Left ventricle myocardium inferior (tissue), 1 donor: ENCODE measurements at regions of chr4 and their contacts with region 1.

Region 1: GRCh38 chr4:112604589-112604988 is 32.1 kb downstream of the ZGRF1 start:
- DNase-seq: no peak
- H3K4me3 ChIP-seq: no peak overlapping the region
- H3K27ac ChIP-seq: no peak overlapping the region
- H3K4me1 ChIP-seq: no peaks in the 10 kb centered on the region
- H3K27me3 ChIP-seq: no peaks in the 10 kb centered on the region
- CTCF ChIP-seq: peak; percentile 70

Region 2: GRCh38 chr4:112327965-112328733 is 276.4 kb before region 1 on chr4:
- intact Hi-C with region 1: loop called (anchors 5 kb)
- DNase-seq: no peak
- H3K4me3 ChIP-seq: no peak overlapping the region
- H3K27ac ChIP-seq: no peak overlapping the region
- H3K4me1 ChIP-seq: no peaks in the 10 kb centered on the region
- H3K27me3 ChIP-seq: no peaks in the 10 kb centered on the region
- CTCF ChIP-seq: peak; percentile 64